HEK293 (cell line): ENCODE measurements at regions of chr6 and their contacts with region 1.

Region 1: GRCh38 chr6:75296811-75297779 is 12.5 kb upstream of the TMEM30A start:
- H3K4me3 ChIP-seq: no peak overlapping the region
- H3K27ac ChIP-seq: no peak overlapping the region
- H3K4me1 ChIP-seq: no peaks in the 10 kb centered on the region
- CTCF ChIP-seq: peak; percentile 47; the same call in 1 of the 2 replicates

Region 2: GRCh38 chr6:75334266-75335040 is 37.4 kb after region 1 on chr6:
- CTCF ChIA-PET with region 1: interaction called, 10 read pairs
- POLR2A ChIA-PET with region 1: no interaction called
- H3K4me3 ChIP-seq: peak overlapping the region; percentile 9; the same call in 1 of the 2 replicates
- H3K27ac ChIP-seq: peak overlapping the region; percentile 6; the same call in 1 of the 2 replicates
- H3K4me1 ChIP-seq: peaks cover 15% of the 10 kb centered on the region
- CTCF ChIP-seq: no peak

Region 3: DNA sequence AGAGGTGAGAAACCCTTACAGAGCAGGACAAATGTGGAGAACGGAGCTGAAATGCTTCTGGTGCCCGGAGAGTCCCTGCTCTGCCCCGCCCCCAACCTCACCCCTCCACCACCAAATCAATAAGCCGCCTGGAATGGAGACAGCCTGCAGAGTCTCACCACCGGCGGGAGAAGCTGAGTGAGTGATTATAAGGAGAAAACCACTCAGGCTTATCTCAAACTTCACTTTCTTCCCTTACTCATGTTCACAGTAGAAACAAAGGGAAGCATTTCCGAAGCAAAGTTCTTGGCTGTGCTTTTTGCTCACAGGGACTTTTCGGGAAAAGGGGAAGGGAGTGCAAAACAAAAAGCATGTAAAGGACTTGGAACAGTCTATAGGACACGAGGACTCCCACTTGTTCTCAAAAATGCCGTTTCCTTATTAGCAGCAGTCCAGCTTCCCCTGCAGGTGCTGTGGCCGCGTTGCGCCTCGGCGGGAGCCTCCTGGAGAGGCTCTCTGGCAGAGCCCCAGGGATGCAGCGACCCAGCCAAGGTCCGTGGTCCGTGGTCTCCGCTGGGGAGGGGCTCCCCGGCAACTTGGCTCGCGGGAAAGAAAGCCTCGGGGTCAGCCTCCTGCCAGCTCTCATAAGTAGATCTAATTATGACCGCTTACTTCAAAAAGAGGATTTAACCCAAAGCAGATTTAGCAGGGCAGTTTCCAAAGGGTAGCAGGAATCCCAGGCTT is 52.3 kb after region 1 on chr6:
- CTCF ChIA-PET with region 1: interaction called, 14 read pairs
- POLR2A ChIA-PET with region 1: no interaction called
- H3K4me3 ChIP-seq: peak overlapping the region; percentile 34
- H3K27ac ChIP-seq: peak overlapping the region; percentile 81
- H3K4me1 ChIP-seq: peaks cover 31% of the 10 kb centered on the region
- CTCF ChIP-seq: peak; percentile 45; the same call in 1 of the 2 replicates

Region 4: DNA sequence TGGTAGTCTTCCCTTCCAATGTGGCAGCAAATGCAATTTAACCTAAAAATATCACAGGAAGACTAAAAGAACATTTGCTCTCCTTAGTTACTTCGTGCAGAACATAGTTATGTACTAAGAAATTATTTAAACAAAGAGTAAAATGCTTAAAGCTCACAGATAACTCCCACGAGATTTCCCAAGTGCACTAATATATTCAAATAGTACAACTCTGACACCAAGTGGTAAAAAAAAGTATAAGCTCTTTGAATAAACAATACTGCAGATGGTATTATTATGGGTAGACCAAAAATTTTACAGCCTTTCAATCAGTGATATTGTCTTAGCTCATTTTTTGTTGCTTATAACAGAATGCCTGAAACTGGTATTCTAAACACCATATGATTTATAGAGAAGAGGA is 249.3 kb after region 1 on chr6:
- CTCF ChIA-PET with region 1: interaction called, 11 read pairs
- POLR2A ChIA-PET with region 1: no interaction called
- H3K4me3 ChIP-seq: no peak overlapping the region
- H3K27ac ChIP-seq: no peak overlapping the region
- H3K4me1 ChIP-seq: no peaks in the 10 kb centered on the region
- CTCF ChIP-seq: no peak